Right ventricle myocardium inferior (tissue), 1 donor: ENCODE measurements at regions of chr11 and their contacts with region 1.

Region 1: GRCh38 chr11:30586251-30587144 is at the start of gene MPPED2:
- DNase-seq: peak; percentile 76
- ATAC-seq: peak; percentile 91
- total RNA-seq, gene MPPED2: 9.7 TPM

Region 2: GRCh38 chr11:30228323-30228884 is 358.1 kb before region 1 on chr11:
- intact Hi-C with region 1: no loop called
- DNase-seq: no peak
- ATAC-seq: no peak

Region 3: DNA sequence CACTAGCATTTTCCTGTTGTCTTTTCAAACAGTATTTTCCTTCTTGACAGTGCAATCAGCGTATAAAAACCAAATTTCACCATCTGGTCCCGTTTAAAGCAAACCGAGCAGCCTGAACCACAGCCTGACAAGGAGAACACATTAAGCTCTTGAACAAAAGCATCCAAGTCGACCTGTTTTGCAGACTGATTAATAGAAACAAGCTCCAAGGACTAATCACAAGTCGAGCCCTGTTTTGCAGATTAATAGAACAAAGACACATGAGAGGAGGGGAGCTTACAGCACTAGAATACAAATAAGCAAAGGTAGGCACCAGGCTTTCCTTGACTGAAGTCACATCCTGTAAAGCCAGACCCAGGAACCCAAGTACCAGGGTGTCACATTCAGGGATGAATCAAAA is 105.2 kb before region 1 on chr11:
- intact Hi-C with region 1: loop called (anchors 5 kb)
- DNase-seq: no peak
- ATAC-seq: no peak

Region 4: DNA sequence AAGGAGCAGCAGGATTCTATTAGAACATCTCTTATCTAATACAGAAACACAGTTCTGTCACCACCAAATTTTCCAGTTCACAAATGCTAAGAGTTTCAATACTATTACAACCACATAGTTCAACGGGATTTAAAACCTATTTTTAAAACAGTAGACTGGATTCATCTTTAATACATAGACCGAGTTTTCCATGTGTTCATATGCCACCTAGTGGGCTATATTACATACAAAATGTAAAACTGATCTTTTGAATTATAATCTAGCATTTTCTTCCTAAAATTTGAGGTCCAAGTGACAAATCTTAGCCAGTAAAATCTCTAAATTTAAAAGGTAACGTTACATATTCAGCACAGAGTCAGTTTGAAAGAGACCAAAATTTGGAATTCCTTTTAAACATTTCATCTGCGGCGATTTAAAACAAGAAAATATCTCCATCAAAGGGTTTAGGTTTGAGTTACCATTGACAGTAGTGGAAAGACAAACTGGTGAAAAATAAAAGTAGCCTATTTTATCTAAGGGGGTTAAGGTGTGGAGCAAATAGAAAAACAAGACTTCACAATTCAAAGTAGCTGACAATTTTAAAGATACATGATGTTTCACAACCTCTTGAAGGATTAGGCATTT is 269.0 kb after region 1 on chr11:
- intact Hi-C with region 1: loop called (anchors 5 kb)
- DNase-seq: no peak
- ATAC-seq: no peak